ENCODE measurements at regions of chr9 and their contacts with region 1.

Region 1: DNA sequence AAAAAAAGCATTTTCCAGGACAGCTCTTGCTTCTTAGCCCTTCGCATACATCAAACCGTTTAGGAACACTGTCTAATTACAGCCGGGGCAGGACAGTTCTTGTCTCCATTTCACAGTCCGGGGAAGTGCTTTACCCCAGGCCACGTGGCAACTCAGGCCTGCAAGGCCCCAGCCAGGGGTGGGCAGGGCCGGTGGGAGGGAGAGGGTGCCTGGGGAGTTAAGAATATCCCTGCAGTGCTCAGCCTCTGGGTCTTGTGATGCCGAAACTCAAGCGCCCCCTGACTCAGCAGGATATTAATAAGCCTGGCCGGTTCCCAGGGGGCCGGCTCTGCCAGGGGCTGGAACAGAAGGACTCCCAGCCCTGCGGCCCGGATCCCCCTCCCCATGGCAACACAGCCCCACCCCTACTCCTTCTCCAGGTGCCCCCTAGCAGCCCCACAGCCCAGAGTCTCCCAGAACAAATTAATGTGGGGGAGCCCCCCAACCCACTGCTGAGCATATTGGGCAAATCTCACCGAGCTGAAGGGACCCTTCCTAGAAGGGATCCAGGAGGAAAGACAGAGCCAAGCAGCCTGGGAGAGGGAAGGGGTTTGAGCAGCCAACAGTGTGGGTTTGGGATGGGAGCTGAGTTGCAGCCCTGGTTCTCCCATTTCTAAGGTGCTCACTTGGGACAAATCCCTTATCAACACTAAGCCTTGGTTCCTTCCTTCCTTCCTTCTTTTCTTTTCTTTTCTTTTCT is 45.3 kb downstream of the PLPP7 start:
- DNase-seq: no peak
- H3K4me3 ChIP-seq: no peak overlapping the region
- H3K27ac ChIP-seq: no peak overlapping the region
- H3K4me1 ChIP-seq: no peaks in the 10 kb centered on the region
- H3K27me3 ChIP-seq: no peaks in the 10 kb centered on the region
- CTCF ChIP-seq: no peak
- POLR2A ChIP-seq: no peak

Region 2: GRCh38 chr9:131068076-131068816 is 266.6 kb before region 1 on chr9:
- intact Hi-C with region 1: loop called (anchors 10 kb)
- DNase-seq: no peak
- H3K4me3 ChIP-seq: no peak overlapping the region
- H3K27ac ChIP-seq: no peak overlapping the region
- H3K4me1 ChIP-seq: no peaks in the 10 kb centered on the region
- H3K27me3 ChIP-seq: no peaks in the 10 kb centered on the region
- CTCF ChIP-seq: no peak
- POLR2A ChIP-seq: no peak

Region 3: DNA sequence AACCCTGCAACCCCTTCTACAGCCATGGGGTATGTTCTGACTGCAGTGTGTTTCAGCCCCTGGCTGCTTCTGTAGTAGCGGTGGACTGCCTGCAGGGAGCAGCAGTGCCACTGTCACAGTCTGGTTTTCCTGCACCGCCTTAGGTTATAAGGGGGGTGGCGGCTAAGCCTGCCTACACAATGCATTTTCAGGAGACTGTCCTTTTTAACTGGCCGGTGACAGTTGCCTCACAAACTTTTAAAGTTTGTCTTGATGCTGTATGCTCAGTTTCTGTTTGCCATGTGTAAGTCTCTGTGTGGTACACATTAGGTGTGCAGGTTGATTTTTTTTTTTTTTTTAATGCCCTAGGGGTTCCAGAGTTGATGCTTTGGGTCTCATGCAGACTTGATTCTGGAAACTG is 156.4 kb before region 1 on chr9:
- intact Hi-C with region 1: loop called (anchors 2 kb)
- DNase-seq: peak; percentile 46
- H3K4me3 ChIP-seq: no peak overlapping the region
- H3K27ac ChIP-seq: no peak overlapping the region
- H3K4me1 ChIP-seq: no peaks in the 10 kb centered on the region
- H3K27me3 ChIP-seq: no peaks in the 10 kb centered on the region
- CTCF ChIP-seq: peak; percentile 69 to 87 (median 82)
- POLR2A ChIP-seq: no peak